ENCODE measurements at regions of chr6 and their contacts with region 1.

Region 1: DNA sequence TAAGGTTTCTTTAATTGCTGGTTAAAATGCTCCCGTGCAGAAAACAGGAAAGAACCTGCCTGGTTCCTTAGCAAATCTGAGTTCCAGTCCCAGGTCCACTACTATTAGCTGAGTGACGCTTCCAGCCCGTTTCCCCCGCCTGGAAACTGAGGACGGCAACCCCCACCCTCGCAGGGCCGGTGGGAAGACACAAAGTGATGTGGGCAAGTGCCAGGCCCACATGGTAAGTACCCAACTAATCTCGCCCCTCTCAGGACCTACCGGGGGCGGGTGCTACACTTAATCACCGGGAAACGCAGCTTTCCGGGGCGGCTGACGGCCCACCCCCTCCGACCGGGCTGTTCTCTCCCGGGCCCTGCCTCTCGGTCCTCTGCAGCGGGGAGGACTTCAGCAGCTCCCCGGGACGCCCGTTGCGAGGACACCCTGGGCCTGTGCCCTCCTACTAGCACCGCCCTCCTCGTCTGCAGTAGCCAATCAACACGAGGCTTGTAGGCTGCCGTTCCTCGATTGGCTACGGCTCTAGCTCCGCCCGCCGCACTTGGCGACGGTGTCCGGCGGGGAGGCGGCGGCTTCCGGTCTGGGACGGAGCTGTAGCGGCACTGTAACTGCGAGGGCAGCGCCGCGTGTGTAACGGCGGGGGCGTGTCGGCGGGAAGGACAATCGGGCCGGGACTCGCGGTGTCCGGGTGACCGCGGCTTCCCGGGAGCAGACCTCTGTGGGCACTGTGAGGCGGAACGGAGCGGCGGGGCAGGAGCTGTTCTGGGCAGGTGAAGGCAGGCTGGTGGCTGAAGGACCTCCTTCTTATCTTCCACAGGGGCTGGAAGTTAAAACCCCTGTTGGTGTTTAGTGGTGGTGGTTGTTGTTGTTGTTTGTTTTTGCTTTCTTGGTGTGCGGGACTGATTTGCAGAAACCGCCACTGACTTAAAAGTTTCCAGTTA is at the start of gene ZBTB9:
- DNase-seq: peak; percentile 95
- H3K4me3 Mint-ChIP-seq: peak within 1 kb of the TSS; percentile 94
- H3K27ac Mint-ChIP-seq: peak within 1 kb of the TSS; percentile 75
- H3K4me1 Mint-ChIP-seq: peaks cover 23% of the 10 kb centered on the region
- H3K27me3 Mint-ChIP-seq: no peaks in the 10 kb centered on the region
- total RNA-seq, gene ZBTB9: 11.4 and 11.5 TPM in 2 replicates

Region 2: DNA sequence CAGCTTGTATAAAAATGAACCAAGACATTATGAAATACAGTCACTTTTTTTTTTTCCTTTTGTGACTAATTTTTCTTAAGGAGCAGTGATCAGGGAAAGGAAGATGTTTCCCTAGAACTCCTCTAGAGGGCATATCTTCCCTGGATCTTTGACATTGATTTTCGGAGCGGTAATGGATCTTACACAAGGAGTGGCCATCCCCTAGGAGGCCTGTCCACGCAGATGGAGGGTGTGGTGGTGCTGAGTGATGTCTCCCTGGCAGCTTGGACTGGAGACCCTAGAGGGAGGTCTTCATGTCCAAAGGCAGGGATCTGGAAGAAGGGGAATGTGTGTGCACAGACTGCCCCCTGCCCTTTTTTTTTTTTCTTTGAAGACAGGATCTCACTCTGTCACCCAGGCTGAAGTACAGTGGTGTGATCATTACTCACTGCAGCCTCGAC is 69.7 kb before region 1 on chr6:
- intact Hi-C with region 1: no loop called
- DNase-seq: no peak
- H3K4me3 Mint-ChIP-seq: no peak overlapping the region
- H3K27ac Mint-ChIP-seq: no peak overlapping the region
- H3K4me1 Mint-ChIP-seq: no peaks in the 10 kb centered on the region
- H3K27me3 Mint-ChIP-seq: peaks cover 4% of the 10 kb centered on the region

Region 3: DNA sequence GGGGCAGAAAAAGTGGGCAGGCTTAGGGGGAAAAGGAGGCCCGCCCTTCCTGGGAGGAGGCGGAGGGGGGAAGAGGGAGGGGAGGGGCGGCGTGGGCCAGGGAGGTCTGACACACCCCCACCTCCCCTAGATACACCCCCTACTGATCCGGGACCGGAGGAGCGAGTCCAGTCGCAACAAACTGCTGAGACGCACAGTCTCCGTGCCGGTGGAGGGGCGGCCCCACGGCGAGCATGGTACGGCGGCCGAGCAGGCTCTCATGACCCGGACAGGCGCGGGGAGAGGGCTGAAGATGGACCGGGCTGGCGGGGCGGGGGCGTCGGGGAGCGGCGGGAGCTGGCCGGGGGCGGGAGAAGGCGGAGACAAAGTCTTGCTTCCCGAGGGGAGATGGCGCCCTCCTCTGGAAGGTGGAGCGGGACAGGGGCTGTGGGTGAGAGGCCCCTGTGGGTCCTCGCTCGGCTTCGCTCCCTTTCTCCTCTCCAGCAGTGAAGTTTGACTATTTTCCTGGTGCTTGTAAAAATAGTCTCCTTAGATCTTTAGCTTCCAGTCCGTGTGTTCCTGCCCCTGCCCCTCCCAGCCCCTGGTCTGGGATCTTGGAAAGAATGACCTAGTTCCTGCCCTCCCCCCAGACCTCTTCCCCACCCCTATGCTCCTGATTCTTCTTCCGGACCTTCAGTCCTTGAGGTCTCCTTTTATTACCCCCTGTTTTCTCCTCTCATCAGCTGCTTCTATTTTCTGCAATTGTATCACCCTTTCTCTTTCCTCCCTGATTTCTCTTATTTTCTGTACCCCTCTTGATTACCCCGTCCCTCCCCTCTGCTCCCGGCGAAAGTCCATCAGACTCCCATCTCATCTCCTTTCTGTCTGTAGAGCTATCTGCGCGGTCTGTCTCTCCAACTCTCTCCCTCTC is 28.4 kb before region 1 on chr6:
- intact Hi-C with region 1: loop called (anchors 2 kb)
- DNase-seq: peak; percentile 73
- H3K4me3 Mint-ChIP-seq: peak overlapping the region; percentile 88
- H3K27ac Mint-ChIP-seq: peak overlapping the region; percentile 90
- H3K4me1 Mint-ChIP-seq: peaks cover 77% of the 10 kb centered on the region
- H3K27me3 Mint-ChIP-seq: no peaks in the 10 kb centered on the region

Region 4: GRCh38 chr6:33535104-33535603 is 80.9 kb after region 1 on chr6:
- intact Hi-C with region 1: loop called (anchors 10 kb)
- DNase-seq: no peak
- H3K4me3 Mint-ChIP-seq: no peak overlapping the region
- H3K27ac Mint-ChIP-seq: no peak overlapping the region
- H3K4me1 Mint-ChIP-seq: peaks cover 14% of the 10 kb centered on the region
- H3K27me3 Mint-ChIP-seq: no peaks in the 10 kb centered on the region

Region 5: GRCh38 chr6:33570806-33571636 is 116.7 kb after region 1 on chr6:
- intact Hi-C with region 1: loop called (anchors 1 kb)
- DNase-seq: peak; percentile 94
- H3K4me3 Mint-ChIP-seq: peak overlapping the region; percentile 85
- H3K27ac Mint-ChIP-seq: peak overlapping the region; percentile 99
- H3K4me1 Mint-ChIP-seq: peaks cover 41% of the 10 kb centered on the region
- H3K27me3 Mint-ChIP-seq: no peaks in the 10 kb centered on the region

Region 6: GRCh38 chr6:33700391-33701050 is 246.2 kb after region 1 on chr6:
- intact Hi-C with region 1: loop called (anchors 10 kb)
- DNase-seq: peak; percentile 66
- H3K4me3 Mint-ChIP-seq: peak overlapping the region; percentile 15
- H3K27ac Mint-ChIP-seq: peak overlapping the region; percentile 86
- H3K4me1 Mint-ChIP-seq: peaks cover 37% of the 10 kb centered on the region
- H3K27me3 Mint-ChIP-seq: no peaks in the 10 kb centered on the region